GM12878 (cell line): ENCODE measurements at regions of chr10 and their contacts with region 1.

Region 1: GRCh38 chr10:23525406-23525805 is 86.5 kb downstream of the OTUD1 start:
- DNase-seq: no peak
- ATAC-seq: peak; percentile 72
- H3K4me3 ChIP-seq: no peak overlapping the region
- H3K27ac ChIP-seq: no peak overlapping the region
- H3K4me1 ChIP-seq: no peaks in the 10 kb centered on the region
- H3K27me3 ChIP-seq: no peaks in the 10 kb centered on the region
- CTCF ChIP-seq: peak; percentile 22 to 52 (median 50); a peak in 5 of 6 replicates
- EP300 ChIP-seq: no peak
- POLR2A ChIP-seq: no peak
- RAD21 ChIP-seq: peak; percentile 68

Region 2: DNA sequence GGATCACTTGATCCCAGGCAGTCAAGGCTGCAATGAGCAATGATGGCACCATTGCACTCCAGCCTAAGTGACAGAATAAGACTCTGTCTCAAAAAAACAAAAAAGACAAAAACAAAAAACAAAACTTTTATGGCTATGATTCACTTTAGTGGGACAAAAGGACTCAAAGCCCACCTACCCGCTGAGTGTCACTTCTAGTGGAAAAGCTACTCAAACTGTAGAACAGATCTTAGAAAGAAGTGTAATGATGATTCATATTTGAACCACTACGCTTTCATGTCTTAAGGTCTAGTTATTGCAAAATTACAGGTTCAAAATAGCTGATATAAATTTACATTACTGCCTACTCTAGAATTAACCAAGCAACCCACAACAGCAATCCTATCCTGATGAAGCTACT is 133.6 kb before region 1 on chr10:
- CTCF ChIA-PET with region 1: no interaction called
- POLR2A ChIA-PET with region 1: no interaction called
- RAD21 ChIA-PET with region 1: no interaction called
- SMC1A ChIA-PET with region 1: no interaction called
- in situ Hi-C with region 1: no loop called
- intact Hi-C with region 1: no loop called
- DNase-seq: no peak
- ATAC-seq: no peak
- H3K4me3 ChIP-seq: no peak overlapping the region
- H3K27ac ChIP-seq: no peak overlapping the region
- H3K4me1 ChIP-seq: no peaks in the 10 kb centered on the region
- H3K27me3 ChIP-seq: no peaks in the 10 kb centered on the region
- CTCF ChIP-seq: no peak
- EP300 ChIP-seq: no peak
- POLR2A ChIP-seq: no peak
- RAD21 ChIP-seq: no peak

Region 3: DNA sequence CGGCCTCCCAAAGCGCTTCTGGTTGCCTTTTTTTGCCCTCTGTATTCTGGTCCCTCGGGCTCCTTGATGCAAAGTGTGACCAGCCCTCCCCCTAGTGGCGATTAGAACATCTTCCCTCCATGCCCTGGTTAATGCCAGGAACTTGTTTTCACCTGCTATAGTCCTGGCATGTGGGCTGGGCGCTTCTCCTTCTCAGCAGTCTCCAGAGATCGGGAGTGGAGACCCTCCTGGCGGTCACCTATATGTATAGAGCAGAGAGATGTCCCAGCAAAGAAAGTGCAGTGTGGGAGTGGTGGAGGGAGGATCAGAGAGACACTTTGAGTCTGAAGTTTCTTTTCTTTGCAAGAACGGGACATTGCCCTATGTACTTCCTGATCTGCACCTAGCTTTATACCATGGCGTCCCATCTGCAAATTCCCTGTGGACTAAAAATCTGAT is 177.6 kb after region 1 on chr10:
- CTCF ChIA-PET with region 1: no interaction called
- POLR2A ChIA-PET with region 1: no interaction called
- RAD21 ChIA-PET with region 1: no interaction called
- SMC1A ChIA-PET with region 1: no interaction called
- in situ Hi-C with region 1: no loop called
- intact Hi-C with region 1: loop called (anchors 5 kb)
- DNase-seq: no peak
- ATAC-seq: peak; percentile 98
- H3K4me3 ChIP-seq: no peak overlapping the region
- H3K27ac ChIP-seq: no peak overlapping the region
- H3K4me1 ChIP-seq: no peaks in the 10 kb centered on the region
- H3K27me3 ChIP-seq: no peaks in the 10 kb centered on the region; a peak in 1 of 4 replicates
- CTCF ChIP-seq: peak; percentile 69 to 78 (median 75)
- EP300 ChIP-seq: no peak
- POLR2A ChIP-seq: no peak
- RAD21 ChIP-seq: peak; percentile 82

Region 4: GRCh38 chr10:24027113-24027512 is 501.7 kb after region 1 on chr10:
- CTCF ChIA-PET with region 1: no interaction called
- POLR2A ChIA-PET with region 1: no interaction called
- RAD21 ChIA-PET with region 1: no interaction called
- SMC1A ChIA-PET with region 1: no interaction called
- in situ Hi-C with region 1: no loop called
- intact Hi-C with region 1: no loop called
- DNase-seq: no peak
- ATAC-seq: no peak
- H3K4me3 ChIP-seq: no peak overlapping the region
- H3K27ac ChIP-seq: no peak overlapping the region
- H3K4me1 ChIP-seq: no peaks in the 10 kb centered on the region
- H3K27me3 ChIP-seq: no peaks in the 10 kb centered on the region
- CTCF ChIP-seq: no peak
- EP300 ChIP-seq: no peak
- POLR2A ChIP-seq: no peak
- RAD21 ChIP-seq: no peak